Astrocyte of the cerebellum (primary cell): ENCODE measurements at regions of chr16 and their contacts with region 1.

Region 1: DNA sequence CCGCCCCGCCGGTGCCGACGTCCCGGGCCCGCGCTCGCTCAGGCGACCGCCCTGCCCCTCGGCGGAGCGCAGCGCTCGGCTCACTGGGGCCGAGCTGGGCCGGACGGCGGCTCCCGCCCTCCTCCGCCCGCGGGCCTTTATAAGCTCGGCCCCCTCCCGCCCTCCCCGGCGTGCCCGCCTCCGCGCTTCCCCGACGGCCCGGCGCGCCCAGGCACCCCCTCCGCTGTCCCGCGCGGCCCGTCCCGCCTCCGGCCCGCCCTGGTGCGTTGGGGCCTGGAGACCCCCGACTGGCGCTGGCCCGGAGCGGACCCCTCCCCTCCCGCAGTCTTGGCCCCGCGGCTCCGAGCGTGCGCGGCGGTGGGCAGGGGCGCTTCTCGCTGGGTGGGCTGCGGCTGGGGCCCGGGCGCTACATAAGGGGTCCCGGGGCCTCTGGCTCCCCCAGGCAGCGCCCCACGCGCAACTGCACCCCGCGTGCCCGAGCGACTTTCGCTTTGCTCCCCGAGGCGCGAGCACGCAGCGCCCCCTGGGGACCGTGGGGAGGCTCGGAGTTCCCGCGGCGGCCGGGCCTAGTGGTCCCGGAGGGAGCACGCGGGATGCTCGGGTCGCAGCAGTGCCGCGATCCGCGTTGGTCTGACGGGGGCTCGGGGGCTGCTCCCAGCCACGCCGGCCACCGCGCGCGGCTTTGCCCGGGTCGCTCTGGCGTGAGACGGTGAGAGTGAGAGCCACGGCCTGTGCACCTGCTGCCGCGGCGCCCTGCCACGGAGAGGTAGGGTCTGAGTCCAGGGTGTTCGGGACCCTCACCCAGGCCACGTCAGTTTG is at the start of gene PIEZO1:
- DNase-seq: no peak
- H3K4me3 ChIP-seq: peak within 1 kb of the TSS; percentile 58
- CTCF ChIP-seq: peak; percentile 74

Region 2: DNA sequence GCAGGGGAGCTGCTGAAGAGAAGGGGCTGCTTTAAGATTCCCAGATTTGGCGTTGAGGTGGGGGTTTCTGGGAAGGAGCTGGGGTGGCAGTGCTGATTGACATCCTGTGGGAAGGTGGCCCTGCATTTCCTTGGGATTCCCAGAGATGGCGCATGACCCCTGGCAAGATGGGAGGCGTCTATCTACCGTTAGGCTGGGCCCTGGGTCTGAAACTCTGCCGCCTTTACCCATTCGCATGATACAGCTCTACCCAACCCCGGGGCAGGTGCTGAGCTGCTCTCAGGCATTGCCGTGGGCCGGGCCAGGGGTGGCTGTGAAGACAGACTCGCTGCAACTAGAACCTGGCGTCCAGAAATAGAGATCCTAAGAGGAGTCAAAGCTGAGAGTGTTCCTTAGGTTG is 112.5 kb before region 1 on chr16:
- in situ Hi-C with region 1: loop called (anchors 10 kb)
- DNase-seq: no peak
- H3K4me3 ChIP-seq: no peak overlapping the region
- CTCF ChIP-seq: peak; percentile 39

Region 3: DNA sequence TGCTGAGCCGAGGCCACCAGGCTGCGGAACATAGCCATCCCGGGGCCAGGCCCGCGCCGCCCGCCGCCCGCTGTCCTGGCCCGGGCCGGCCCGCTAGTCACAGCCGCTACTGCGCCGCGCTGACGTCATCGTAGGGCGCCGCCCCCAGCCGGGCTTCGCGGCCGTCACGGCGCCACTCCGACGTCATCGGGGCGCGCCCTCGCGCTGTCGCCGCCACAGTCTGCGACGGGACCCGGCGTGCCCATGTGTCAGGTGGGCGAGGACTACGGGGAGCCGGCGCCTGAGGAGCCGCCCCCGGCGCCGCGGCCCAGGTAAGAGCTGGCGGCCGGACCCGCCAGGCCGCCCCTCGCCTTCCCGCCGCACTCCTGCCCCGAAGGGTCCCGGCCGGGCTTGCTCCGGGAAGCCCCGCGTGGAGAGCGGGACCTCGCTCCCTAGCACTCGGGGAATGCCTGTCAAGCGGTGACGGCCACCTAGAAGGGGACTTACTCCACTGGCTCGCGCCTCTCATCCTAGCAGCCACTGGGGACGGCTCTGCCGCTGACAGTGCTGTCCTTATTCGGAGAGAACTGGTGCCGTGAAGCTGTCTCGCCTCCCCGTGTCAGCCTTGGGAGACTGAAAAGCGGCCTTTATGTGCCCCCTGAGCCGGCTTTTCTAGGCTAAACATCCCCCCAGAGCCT is 78.9 kb before region 1 on chr16 and contains the starts of genes CTU2 and RNF166:
- in situ Hi-C with region 1: no loop called
- DNase-seq: peak; percentile 54
- H3K4me3 ChIP-seq: peak within 1 kb of the TSS; percentile 95
- CTCF ChIP-seq: no peak